PC-9 (cell line): ENCODE measurements at regions of chr17 and their contacts with region 1.

Region 1: GRCh38 chr17:32801641-32802040 is 75.3 kb downstream of the MYO1D start:
- DNase-seq: no peak
- H3K4me3 ChIP-seq: no peak overlapping the region
- H3K27ac ChIP-seq: no peak overlapping the region
- H3K4me1 ChIP-seq: no peaks in the 10 kb centered on the region
- H3K27me3 ChIP-seq: no peaks in the 10 kb centered on the region
- CTCF ChIP-seq: no peak

Region 2: DNA sequence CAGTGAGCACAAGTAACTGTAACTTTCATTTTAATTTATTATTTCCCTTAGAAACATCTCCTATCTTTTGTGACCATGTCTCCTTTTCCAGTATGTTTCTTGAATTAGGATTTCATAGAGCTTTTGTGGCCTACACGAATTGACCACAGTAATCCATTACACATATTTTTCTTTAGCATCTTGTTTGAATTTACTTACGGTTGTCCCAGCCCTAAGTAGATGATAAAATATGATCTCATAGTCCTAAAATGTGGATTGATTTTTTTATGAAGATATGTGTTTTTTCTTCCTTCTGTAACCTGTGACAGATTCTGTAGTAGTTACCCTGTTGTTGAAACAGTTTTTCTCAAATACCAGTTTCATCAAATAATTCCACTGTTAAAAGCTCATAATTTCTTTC is 1645.3 kb before region 1 on chr17:
- CTCF ChIA-PET with region 1: no interaction called
- POLR2A ChIA-PET with region 1: interaction called, 15 read pairs
- intact Hi-C with region 1: no loop called
- DNase-seq: no peak
- H3K4me3 ChIP-seq: no peak overlapping the region
- H3K27ac ChIP-seq: no peak overlapping the region
- H3K4me1 ChIP-seq: no peaks in the 10 kb centered on the region
- H3K27me3 ChIP-seq: no peaks in the 10 kb centered on the region
- CTCF ChIP-seq: no peak

Region 3: GRCh38 chr17:33200587-33200986 is 398.9 kb after region 1 on chr17:
- CTCF ChIA-PET with region 1: no interaction called
- POLR2A ChIA-PET with region 1: no interaction called
- intact Hi-C with region 1: no loop called
- DNase-seq: no peak
- H3K4me3 ChIP-seq: no peak overlapping the region
- H3K27ac ChIP-seq: no peak overlapping the region
- H3K4me1 ChIP-seq: no peaks in the 10 kb centered on the region
- H3K27me3 ChIP-seq: peaks cover 7% of the 10 kb centered on the region; the same call in 1 of the 2 replicates
- CTCF ChIP-seq: no peak